ENCODE measurements at regions of chr2 and their contacts with region 1.

Region 1: GRCh38 chr2:3651691-3652648 is 6.0 kb upstream of the ALLC start:
- DNase-seq: peak; percentile 65
- H3K4me3 ChIP-seq: peak overlapping the region in 3 of 4 donors; percentile 15 to 33 (median 20)
- H3K27ac ChIP-seq: peak overlapping the region; percentile 24 to 79 (median 73)
- H3K4me1 ChIP-seq: peaks cover 3 to 11% (median 7%) of the 10 kb centered on the region in 4 donors
- H3K27me3 ChIP-seq: peaks cover 9% of the 10 kb centered on the region
- CTCF ChIP-seq: no peak
- EP300 ChIP-seq: no peak
- POLR2A ChIP-seq: no peak

Region 2: GRCh38 chr2:2146969-2147900 is 1504.7 kb before region 1 on chr2:
- in situ Hi-C with region 1: loop called in 1 of 4 experiments (anchors 25 kb)
- intact Hi-C with region 1: no loop called
- DNase-seq: no peak
- H3K4me3 ChIP-seq: no peak overlapping the region
- H3K27ac ChIP-seq: peak overlapping the region in 1 of 4 donors; percentile 5
- H3K4me1 ChIP-seq: no peaks in the 10 kb centered on the region
- H3K27me3 ChIP-seq: no peaks in the 10 kb centered on the region
- CTCF ChIP-seq: no peak
- EP300 ChIP-seq: no peak
- POLR2A ChIP-seq: no peak

Region 3: DNA sequence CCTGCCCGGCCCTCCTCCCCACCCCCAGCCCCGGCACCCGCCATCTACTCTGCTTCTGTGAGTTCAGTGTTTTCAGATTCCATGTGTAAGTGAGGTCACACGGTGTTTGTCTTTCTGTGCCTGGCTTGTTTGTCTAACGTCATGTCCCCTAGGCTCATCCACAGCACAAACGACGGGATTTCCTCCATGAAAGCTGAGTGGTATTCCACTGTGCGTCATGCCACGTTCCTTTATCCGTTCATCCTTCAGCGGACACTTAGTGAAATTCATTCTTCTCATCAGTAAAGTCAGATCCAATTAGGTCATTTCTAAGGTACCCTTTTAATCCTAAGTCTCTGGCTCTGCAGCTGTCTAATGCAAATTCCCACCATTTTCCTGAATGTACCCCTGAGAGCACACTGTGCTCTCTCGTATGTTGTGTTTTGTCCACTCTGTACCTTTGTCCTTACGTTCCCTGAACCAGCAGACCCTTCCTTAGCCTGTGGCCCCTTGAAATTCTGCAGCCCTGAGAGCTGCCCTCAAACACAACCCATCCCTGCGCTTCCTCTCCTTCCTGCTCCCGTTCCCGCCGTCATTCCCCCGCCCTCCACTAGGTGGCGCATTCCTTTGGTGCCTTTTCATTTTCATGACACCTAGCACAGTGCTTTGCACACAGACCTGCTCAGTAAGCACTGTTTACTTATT is 228.3 kb before region 1 on chr2:
- in situ Hi-C with region 1: no loop called
- intact Hi-C with region 1: loop called (anchors 10 kb)
- DNase-seq: peak; percentile 72
- H3K4me3 ChIP-seq: no peak overlapping the region
- H3K27ac ChIP-seq: no peak overlapping the region
- H3K4me1 ChIP-seq: no peaks in the 10 kb centered on the region
- H3K27me3 ChIP-seq: no peaks in the 10 kb centered on the region
- CTCF ChIP-seq: peak; percentile 89 to 99 (median 96)
- EP300 ChIP-seq: no peak
- POLR2A ChIP-seq: no peak

Measured in transverse colon (tissue), 4 donors.